CD4-positive, alpha-beta memory T cell (primary cell): ENCODE measurements at regions of chr3 and their contacts with region 1.

Region 1: GRCh38 chr3:122383771-122384697 is at the start of gene FAM162A:
- DNase-seq: peak; percentile 92 to 93 (median 93)
- H3K4me3 ChIP-seq: peak within 1 kb of the TSS; percentile 72 to 84
- H3K4me3 Mint-ChIP-seq: peak within 1 kb of the TSS; percentile 89 to 96 (median 94)
- H3K27ac ChIP-seq: peak within 1 kb of the TSS; percentile 76
- H3K27ac Mint-ChIP-seq: peak within 1 kb of the TSS; percentile 93 to 98 (median 95)
- H3K4me1 ChIP-seq: peaks cover 31% of the 10 kb centered on the region
- H3K4me1 Mint-ChIP-seq: peaks cover 21 to 51% (median 36%) of the 10 kb centered on the region in 4 donors
- H3K27me3 ChIP-seq: no peaks in the 10 kb centered on the region
- H3K27me3 Mint-ChIP-seq: no peaks in the 10 kb centered on the region
- total RNA-seq, gene FAM162A: 31.1 to 32.8 TPM

Region 2: GRCh38 chr3:121660356-121661171 is 723.5 kb before region 1 on chr3 and contains the start of gene HCLS1:
- CTCF ChIA-PET with region 1: no interaction called
- POLR2A ChIA-PET with region 1: interaction called, 6 read pairs
- intact Hi-C with region 1: loop called (anchors 2 kb)
- DNase-seq: peak; percentile 80 to 86 (median 83)
- H3K4me3 ChIP-seq: peak within 1 kb of the TSS; percentile 58 to 76
- H3K4me3 Mint-ChIP-seq: peak within 1 kb of the TSS; percentile 91 to 99 (median 94)
- H3K27ac ChIP-seq: peak within 1 kb of the TSS; percentile 85
- H3K27ac Mint-ChIP-seq: peak within 1 kb of the TSS; percentile 95 to 100 (median 99)
- H3K4me1 ChIP-seq: peaks cover 42% of the 10 kb centered on the region
- H3K4me1 Mint-ChIP-seq: peaks cover 36 to 62% (median 50%) of the 10 kb centered on the region in 4 donors
- H3K27me3 ChIP-seq: no peaks in the 10 kb centered on the region
- H3K27me3 Mint-ChIP-seq: no peaks in the 10 kb centered on the region
- total RNA-seq, gene HCLS1: 336 TPM

Region 3: DNA sequence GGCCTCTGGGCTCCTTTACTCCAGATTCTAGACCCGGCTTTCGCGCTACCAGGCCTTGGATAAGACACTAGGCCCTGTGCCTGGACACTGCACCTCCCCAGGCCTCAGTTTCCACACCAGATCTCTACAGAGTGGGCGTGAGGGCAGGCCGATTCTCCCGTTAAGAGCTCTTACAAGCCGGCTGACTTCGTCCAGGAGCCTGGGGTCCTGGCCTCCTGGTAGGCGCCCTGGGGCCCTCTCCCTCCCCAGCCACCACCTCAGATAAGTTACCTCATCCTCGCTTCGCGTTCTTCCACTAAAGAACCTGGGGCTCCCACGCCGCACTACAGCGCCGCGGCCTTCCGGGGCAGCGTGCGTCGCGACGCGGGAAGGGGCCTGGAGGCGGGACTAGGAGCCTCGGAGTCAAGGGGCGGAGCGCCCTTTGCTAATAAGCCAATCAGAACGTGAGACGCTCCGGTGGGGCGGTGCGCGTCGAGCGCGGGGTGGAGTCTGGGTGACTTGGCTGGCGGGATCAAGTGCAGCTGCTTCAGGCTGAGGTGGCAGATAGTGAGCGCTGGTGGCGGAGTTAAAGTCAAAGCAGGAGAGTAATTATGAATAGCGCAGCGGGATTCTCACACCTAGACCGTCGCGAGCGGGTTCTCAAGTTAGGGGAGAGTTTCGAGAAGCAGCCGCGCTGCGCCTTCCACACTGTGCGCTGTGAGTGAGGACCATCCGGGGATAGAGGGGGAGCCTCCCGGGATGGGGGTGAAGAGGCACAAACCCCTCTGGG is 549.2 kb before region 1 on chr3 and contains the starts of genes EAF2 and IQCB1:
- CTCF ChIA-PET with region 1: no interaction called
- POLR2A ChIA-PET with region 1: no interaction called
- intact Hi-C with region 1: loop called (anchors 10 kb)
- DNase-seq: peak; percentile 97 to 98 (median 97)
- H3K4me3 ChIP-seq: peak within 1 kb of the TSS; percentile 83 to 96
- H3K4me3 Mint-ChIP-seq: peak within 1 kb of the TSS; percentile 92 to 98 (median 94)
- H3K27ac ChIP-seq: peak within 1 kb of the TSS; percentile 84
- H3K27ac Mint-ChIP-seq: peak within 1 kb of the TSS; percentile 77 to 98 (median 94)
- H3K4me1 ChIP-seq: peaks cover 30% of the 10 kb centered on the region
- H3K4me1 Mint-ChIP-seq: peaks cover 32 to 54% (median 44%) of the 10 kb centered on the region in 4 donors
- H3K27me3 ChIP-seq: no peaks in the 10 kb centered on the region
- H3K27me3 Mint-ChIP-seq: no peaks in the 10 kb centered on the region
- total RNA-seq, gene EAF2: 5.7 to 6.3 TPM
- total RNA-seq, gene IQCB1: 37.9 to 38.2 TPM

Region 4: DNA sequence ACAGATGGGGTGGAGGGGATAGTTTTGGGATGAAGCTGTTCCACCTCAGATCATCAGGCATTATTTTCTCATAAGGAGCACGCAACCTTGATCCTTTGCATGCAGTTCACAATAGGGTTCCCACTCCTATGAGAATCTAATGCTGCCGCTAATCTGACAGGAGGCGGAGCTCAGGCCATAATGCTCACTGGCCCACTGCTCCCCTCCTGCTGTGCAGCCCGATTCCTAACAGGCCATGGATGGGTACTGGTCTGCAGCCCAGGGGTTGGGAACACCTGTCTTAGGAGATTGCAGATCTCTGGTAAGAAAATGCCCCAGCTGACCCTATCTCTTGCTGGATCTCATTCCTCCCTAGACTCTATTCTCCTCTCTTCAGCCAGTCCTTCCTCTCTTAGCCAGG is 52.1 kb before region 1 on chr3:
- CTCF ChIA-PET with region 1: no interaction called
- POLR2A ChIA-PET with region 1: no interaction called
- intact Hi-C with region 1: no loop called
- DNase-seq: no peak
- H3K4me3 ChIP-seq: no peak overlapping the region
- H3K4me3 Mint-ChIP-seq: no peak overlapping the region
- H3K27ac ChIP-seq: no peak overlapping the region
- H3K27ac Mint-ChIP-seq: no peak overlapping the region
- H3K4me1 ChIP-seq: no peaks in the 10 kb centered on the region
- H3K4me1 Mint-ChIP-seq: no peaks in the 10 kb centered on the region
- H3K27me3 ChIP-seq: no peaks in the 10 kb centered on the region
- H3K27me3 Mint-ChIP-seq: peaks cover 4 to 7% of the 10 kb centered on the region in 2 donors

Region 5: GRCh38 chr3:122514123-122515019 is 130.3 kb after region 1 on chr3 and contains the start of gene KPNA1:
- CTCF ChIA-PET with region 1: interaction called, 6 read pairs
- POLR2A ChIA-PET with region 1: interaction called, 23 read pairs
- intact Hi-C with region 1: loop called (anchors 1 kb)
- DNase-seq: peak; percentile 86 to 92 (median 90)
- H3K4me3 ChIP-seq: peak within 1 kb of the TSS; percentile 58 to 71
- H3K4me3 Mint-ChIP-seq: peak within 1 kb of the TSS; percentile 90 to 95 (median 93)
- H3K27ac ChIP-seq: peak within 1 kb of the TSS; percentile 97
- H3K27ac Mint-ChIP-seq: peak within 1 kb of the TSS; percentile 91 to 98 (median 96)
- H3K4me1 ChIP-seq: peaks cover 30% of the 10 kb centered on the region
- H3K4me1 Mint-ChIP-seq: peaks cover 24 to 51% (median 36%) of the 10 kb centered on the region in 4 donors
- H3K27me3 ChIP-seq: no peaks in the 10 kb centered on the region
- H3K27me3 Mint-ChIP-seq: no peaks in the 10 kb centered on the region
- total RNA-seq, gene KPNA1: 67.4 to 71.5 TPM

Region 6: DNA sequence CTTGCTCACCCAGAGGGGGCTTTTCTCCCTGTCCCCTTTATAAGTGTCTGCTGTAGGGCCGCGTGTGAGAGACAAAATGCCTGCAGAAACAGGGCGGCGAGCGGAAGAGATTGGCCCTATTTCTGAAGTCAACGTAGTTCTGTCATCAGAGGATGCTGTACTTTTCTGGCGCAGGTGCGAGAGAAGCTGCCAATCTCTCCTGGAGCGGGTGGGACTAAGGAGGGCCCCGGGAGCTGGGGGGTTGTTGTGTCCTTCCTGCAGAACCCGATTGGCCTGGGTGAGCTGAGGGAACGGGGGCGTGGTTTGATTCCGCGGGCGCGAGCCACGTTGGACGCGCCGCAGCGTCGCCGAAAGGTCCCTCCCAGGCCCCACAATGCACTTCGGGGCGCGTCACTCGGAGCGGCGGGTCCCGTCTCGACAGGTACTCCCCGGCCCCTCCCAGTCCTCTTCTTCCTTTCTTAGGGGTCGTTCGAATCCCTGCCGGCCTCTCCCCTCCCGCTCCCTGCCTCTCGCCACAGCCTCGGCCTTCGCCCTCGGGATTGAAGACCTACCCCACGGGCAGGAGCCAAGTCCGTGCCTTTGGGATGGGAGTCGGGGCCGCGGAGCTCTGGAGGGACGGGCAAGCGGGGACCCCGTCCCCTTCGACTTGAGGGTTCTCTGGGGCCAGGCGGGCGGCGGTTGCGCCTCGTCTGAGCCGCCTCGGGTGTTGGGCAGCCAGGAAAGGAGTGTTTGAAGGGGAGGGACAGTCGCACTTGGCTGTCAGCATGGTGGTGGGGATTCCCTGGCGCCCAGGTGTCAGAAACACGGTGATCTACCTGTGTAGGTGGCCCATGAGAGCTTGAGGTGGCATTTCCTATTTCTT is 817.8 kb after region 1 on chr3 and contains the start of gene SEC22A:
- CTCF ChIA-PET with region 1: no interaction called
- POLR2A ChIA-PET with region 1: interaction called, 13 read pairs
- intact Hi-C with region 1: loop called (anchors 1 kb)
- DNase-seq: peak; percentile 95 to 98 (median 98)
- H3K4me3 ChIP-seq: peak within 1 kb of the TSS; percentile 82 to 91
- H3K4me3 Mint-ChIP-seq: peak within 1 kb of the TSS; percentile 88 to 98 (median 90)
- H3K27ac ChIP-seq: peak within 1 kb of the TSS; percentile 98
- H3K27ac Mint-ChIP-seq: peak within 1 kb of the TSS; percentile 92 to 99 (median 98)
- H3K4me1 ChIP-seq: peaks cover 20% of the 10 kb centered on the region
- H3K4me1 Mint-ChIP-seq: peaks cover 21 to 38% (median 28%) of the 10 kb centered on the region in 4 donors
- H3K27me3 ChIP-seq: no peaks in the 10 kb centered on the region
- H3K27me3 Mint-ChIP-seq: peaks cover 0 to 4% of the 10 kb centered on the region in 2 donors
- total RNA-seq, gene SEC22A: 19.4 to 23.2 TPM